Gastrocnemius medialis (tissue), 4 donors: ENCODE measurements at regions of chr2 and their contacts with region 1.

Region 1: GRCh38 chr2:109545828-109546713 is 67.7 kb downstream of the SEPTIN10 start:
- DNase-seq: peak in 1 of 2 donors; percentile 39
- ATAC-seq: peak; percentile 68 to 83
- H3K4me3 ChIP-seq: no peak overlapping the region
- H3K27ac ChIP-seq: no peak overlapping the region
- H3K4me1 ChIP-seq: no peaks in the 10 kb centered on the region
- H3K27me3 ChIP-seq: no peaks in the 10 kb centered on the region
- CTCF ChIP-seq: peak; percentile 75 to 94 (median 88)
- POLR2A ChIP-seq: no peak

Region 2: GRCh38 chr2:109613922-109614714 is 68.0 kb after region 1 on chr2 and contains the starts of genes SEPTIN10 and SOWAHC:
- in situ Hi-C with region 1: no loop called
- intact Hi-C with region 1: loop called (anchors 5 kb)
- DNase-seq: peak; percentile 86 to 91
- ATAC-seq: peak; percentile 89 to 92
- H3K4me3 ChIP-seq: peak within 1 kb of the TSS; percentile 66 to 83 (median 70)
- H3K27ac ChIP-seq: peak within 1 kb of the TSS; percentile 83 to 98 (median 95)
- H3K4me1 ChIP-seq: peaks cover 15 to 23% of the 10 kb centered on the region in 2 donors
- H3K27me3 ChIP-seq: no peaks in the 10 kb centered on the region
- CTCF ChIP-seq: no peak
- POLR2A ChIP-seq: peak; percentile 69 to 79
- total RNA-seq, gene SEPTIN10: 22.3 to 39.4 (median 29.6) TPM
- total RNA-seq, gene SOWAHC: 0.75 to 1.4 (median 0.96) TPM

Region 3: GRCh38 chr2:109715313-109715805 is 169.3 kb after region 1 on chr2:
- in situ Hi-C with region 1: loop called in 1 of 4 experiments (anchors 10 kb)
- intact Hi-C with region 1: loop called (anchors 5 kb)
- DNase-seq: no peak
- ATAC-seq: no peak
- H3K4me3 ChIP-seq: no peak overlapping the region
- H3K27ac ChIP-seq: no peak overlapping the region
- H3K4me1 ChIP-seq: peaks cover 0 to 5% of the 10 kb centered on the region in 2 donors
- H3K27me3 ChIP-seq: no peaks in the 10 kb centered on the region
- CTCF ChIP-seq: peak in 3 of 5 experiments; percentile 29 to 50 (median 31)
- POLR2A ChIP-seq: no peak

Region 4: GRCh38 chr2:109736177-109736827 is 190.2 kb after region 1 on chr2:
- in situ Hi-C with region 1: no loop called
- intact Hi-C with region 1: loop called (anchors 1 kb)
- DNase-seq: peak in 1 of 2 donors; percentile 51
- ATAC-seq: peak; percentile 53 to 63
- H3K4me3 ChIP-seq: no peak overlapping the region
- H3K27ac ChIP-seq: no peak overlapping the region
- H3K4me1 ChIP-seq: no peaks in the 10 kb centered on the region
- H3K27me3 ChIP-seq: no peaks in the 10 kb centered on the region
- CTCF ChIP-seq: peak; percentile 40 to 72 (median 67)
- POLR2A ChIP-seq: no peak